Activated CD8-positive, alpha-beta T cell treated with anti-CD3 and anti-CD28 coated beads for 36 hours (primary cell): ENCODE measurements at regions of chr17 and their contacts with region 1.

Region 1: GRCh38 chr17:55513885-55514591 is 2.8 kb upstream of the SMIM36 start:
- DNase-seq: peak; percentile 88
- ATAC-seq: peak; percentile 68
- H3K4me3 Mint-ChIP-seq: no peak overlapping the region
- H3K27ac Mint-ChIP-seq: no peak overlapping the region
- H3K4me1 Mint-ChIP-seq: no peaks in the 10 kb centered on the region
- H3K27me3 Mint-ChIP-seq: peaks cover 6% of the 10 kb centered on the region
- CTCF ChIP-seq: peak; percentile 80

Region 2: GRCh38 chr17:55348749-55349354 is 165.2 kb before region 1 on chr17:
- CTCF ChIA-PET with region 1: interaction called, 57 read pairs
- POLR2A ChIA-PET with region 1: no interaction called
- intact Hi-C with region 1: no loop called
- DNase-seq: peak; percentile 48
- ATAC-seq: no peak
- H3K4me3 Mint-ChIP-seq: no peak overlapping the region
- H3K27ac Mint-ChIP-seq: no peak overlapping the region
- H3K4me1 Mint-ChIP-seq: peaks cover 15% of the 10 kb centered on the region
- H3K27me3 Mint-ChIP-seq: peaks cover 4% of the 10 kb centered on the region
- CTCF ChIP-seq: peak; percentile 88

Region 3: GRCh38 chr17:55416470-55417052 is 97.5 kb before region 1 on chr17:
- CTCF ChIA-PET with region 1: interaction called, 7 read pairs
- POLR2A ChIA-PET with region 1: no interaction called
- intact Hi-C with region 1: loop called (anchors 10 kb)
- DNase-seq: no peak
- ATAC-seq: no peak
- H3K4me3 Mint-ChIP-seq: peak overlapping the region; percentile 6
- H3K27ac Mint-ChIP-seq: peak overlapping the region; percentile 63
- H3K4me1 Mint-ChIP-seq: peaks cover 54% of the 10 kb centered on the region
- H3K27me3 Mint-ChIP-seq: no peaks in the 10 kb centered on the region
- CTCF ChIP-seq: no peak

Region 4: DNA sequence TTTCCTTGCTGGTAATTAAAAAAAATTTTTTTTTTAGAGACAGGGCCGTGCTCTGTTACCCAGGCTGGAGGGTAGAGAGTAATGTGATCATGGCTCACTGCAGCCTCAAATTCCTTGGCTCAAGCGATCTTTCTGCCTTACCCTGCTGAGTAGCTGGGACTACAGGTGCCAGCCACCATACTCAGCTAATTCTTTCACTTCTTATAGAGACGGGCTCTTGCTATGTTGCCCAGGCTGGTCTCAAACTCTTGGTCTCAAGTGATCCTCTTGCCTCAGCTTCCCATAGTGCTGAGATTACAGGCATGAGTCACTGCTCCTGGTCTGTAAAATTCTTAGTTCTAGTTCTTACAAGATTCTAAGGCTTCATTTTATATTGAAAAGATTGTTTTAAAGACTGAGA is 13.9 kb before region 1 on chr17:
- CTCF ChIA-PET with region 1: interaction called, 14 read pairs
- POLR2A ChIA-PET with region 1: no interaction called
- intact Hi-C with region 1: no loop called
- DNase-seq: peak; percentile 3
- ATAC-seq: no peak
- H3K4me3 Mint-ChIP-seq: no peak overlapping the region
- H3K27ac Mint-ChIP-seq: no peak overlapping the region
- H3K4me1 Mint-ChIP-seq: no peaks in the 10 kb centered on the region
- H3K27me3 Mint-ChIP-seq: peaks cover 3% of the 10 kb centered on the region
- CTCF ChIP-seq: no peak